Panc1 (cell line): ENCODE measurements at regions of chr17 and their contacts with region 1.

Region 1: DNA sequence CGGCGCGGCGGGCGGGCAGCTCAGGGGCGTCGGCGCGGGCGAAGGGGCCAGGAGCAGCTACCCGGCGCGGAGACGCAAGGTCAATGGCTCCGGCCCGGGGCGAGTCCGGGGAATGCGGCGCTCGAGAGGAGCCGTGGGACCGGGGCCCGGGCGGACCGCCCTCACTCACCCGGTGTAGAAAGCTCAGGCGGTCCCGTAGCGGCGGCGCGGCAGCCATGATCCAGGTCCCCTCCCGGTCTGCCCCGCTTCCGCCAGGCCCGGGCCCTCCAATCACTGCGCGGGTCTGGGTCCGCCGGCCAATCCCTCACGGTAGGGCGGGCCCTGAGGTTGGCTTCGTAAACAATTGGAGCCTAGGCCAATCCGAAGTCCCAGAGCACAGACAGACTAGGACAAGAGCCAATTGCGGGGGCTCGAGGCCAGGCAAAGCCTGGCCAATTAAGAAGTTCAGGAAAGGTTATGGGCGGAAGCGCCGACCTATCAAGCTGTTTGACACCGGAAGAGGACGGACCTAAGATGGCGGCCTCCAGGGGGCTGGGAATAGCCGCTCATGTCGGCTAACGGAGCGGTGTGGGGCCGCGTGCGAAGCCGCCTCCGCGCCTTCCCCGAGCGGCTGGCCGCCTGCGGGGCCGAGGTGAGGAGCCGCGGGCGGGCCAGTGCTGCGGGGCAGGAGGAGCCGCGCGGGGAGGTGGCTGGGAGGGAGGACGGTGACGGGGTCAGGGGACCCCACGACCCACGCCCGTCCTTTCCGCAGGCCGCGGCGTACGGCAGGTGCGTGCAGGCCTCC is at the starts of genes NDUFAF8 and TEPSIN:
- DNase-seq: peak; percentile 96
- ATAC-seq: peak; percentile 94
- H3K4me3 ChIP-seq: peak within 1 kb of the TSS; percentile 76 to 99
- H3K27ac ChIP-seq: peak within 1 kb of the TSS; percentile 93
- H3K4me1 ChIP-seq: peaks cover 40% of the 10 kb centered on the region
- H3K27me3 ChIP-seq: no peaks in the 10 kb centered on the region
- CTCF ChIP-seq: no peak
- total RNA-seq, gene NDUFAF8: 75.8 TPM
- total RNA-seq, gene TEPSIN: 44.9 TPM

Region 2: DNA sequence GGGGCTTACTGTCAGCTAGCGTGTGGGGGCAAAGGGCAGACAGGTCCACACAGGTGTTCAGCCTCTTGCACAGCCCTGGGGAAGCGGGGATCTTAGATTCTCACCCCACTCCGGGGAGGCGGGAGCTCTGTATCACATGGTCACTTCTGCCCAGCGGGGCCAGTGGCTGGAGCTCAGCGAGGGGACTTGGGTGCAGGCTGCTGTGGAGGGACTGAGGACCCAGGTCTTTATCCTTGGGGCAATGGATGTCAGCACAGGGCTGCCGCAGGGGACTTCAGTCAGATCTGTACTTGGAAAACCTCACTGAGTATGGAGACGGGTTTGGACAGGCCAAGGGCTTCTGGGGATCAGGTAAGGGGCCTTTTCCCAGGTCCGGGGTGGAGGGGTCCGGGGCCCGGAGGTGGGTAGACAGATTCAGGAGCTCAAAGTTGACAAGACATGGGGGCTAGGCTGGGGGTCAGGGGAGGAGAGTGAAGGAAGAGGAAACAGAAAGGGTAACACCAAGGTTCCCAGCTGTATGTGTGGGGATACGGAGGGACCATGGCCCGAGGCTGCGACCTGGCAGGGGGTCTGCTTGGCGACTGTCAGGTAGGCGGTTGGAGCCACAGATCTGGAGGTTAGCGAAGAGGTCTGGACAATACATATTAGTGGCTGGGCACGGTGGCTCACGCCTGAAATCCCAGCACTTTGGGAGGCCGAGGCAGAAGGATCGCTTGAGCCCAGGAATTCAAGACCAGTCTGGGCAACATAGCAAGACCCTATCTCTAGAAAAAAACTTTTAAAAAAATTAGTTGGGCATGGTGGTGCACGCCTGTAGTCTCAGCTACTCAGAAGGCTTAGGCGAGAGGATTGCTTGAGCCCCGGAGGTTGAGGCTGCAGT is 219.2 kb before region 1 on chr17:
- CTCF ChIA-PET with region 1: no interaction called
- POLR2A ChIA-PET with region 1: interaction called, 10 read pairs
- in situ Hi-C with region 1: no loop called
- intact Hi-C with region 1: no loop called
- DNase-seq: no peak
- ATAC-seq: no peak
- H3K4me3 ChIP-seq: no peak overlapping the region
- H3K27ac ChIP-seq: no peak overlapping the region
- H3K4me1 ChIP-seq: peaks cover 31% of the 10 kb centered on the region
- H3K27me3 ChIP-seq: no peaks in the 10 kb centered on the region
- CTCF ChIP-seq: no peak